ENCODE measurements at regions of chr11 and their contacts with region 1.

Region 1: GRCh38 chr11:67265633-67266423 is 445 bp upstream of the GRK2 start:
- DNase-seq: peak; percentile 70
- H3K4me3 ChIP-seq: no peak overlapping the region
- H3K27ac ChIP-seq: peak overlapping the region; percentile 67 to 76
- H3K4me1 ChIP-seq: peaks cover 27% of the 10 kb centered on the region
- H3K27me3 ChIP-seq: no peaks in the 10 kb centered on the region
- CTCF ChIP-seq: peak; percentile 76 to 97 (median 86)
- POLR2A ChIP-seq: no peak

Region 2: DNA sequence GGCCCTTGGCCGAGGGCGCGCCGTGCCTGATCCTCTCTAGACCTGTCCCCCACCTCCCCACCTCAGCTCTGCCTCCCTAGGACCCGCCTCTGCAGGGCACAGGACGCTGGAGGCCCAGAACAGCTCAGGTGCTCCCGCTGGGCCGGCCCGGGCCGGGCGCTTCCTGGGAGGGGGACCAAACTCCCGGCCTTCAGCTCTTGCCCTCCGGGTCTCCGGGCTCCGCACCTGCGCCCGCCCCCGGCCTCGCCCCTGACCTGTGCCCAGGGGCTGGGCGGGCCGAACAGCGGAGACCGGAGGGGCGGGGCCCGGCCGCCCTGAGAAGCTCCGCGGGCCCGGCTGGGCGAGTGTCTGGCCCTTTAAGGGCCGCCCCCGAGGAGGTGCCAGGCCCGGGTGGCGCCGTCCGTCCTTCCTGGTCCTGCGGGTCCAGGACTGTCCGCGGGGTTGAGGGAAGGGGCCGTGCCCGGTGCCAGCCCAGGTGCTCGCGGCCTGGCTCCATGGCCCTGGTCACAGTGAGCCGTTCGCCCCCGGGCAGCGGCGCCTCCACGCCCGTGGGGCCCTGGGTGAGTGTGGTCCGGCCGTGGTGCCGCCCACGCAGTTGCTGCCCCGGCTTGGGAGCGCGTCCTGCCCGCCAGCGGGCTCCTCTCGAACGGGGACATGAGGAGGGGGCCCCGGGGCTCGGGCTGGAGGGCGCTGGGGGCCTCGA is 37.5 kb after region 1 on chr11 and contains the start of gene SSH3:
- intact Hi-C with region 1: loop called (anchors 5 kb)
- DNase-seq: peak; percentile 81
- H3K4me3 ChIP-seq: peak within 1 kb of the TSS; percentile 85 to 97
- H3K27ac ChIP-seq: peak within 1 kb of the TSS; percentile 89 to 91
- H3K4me1 ChIP-seq: peaks cover 13% of the 10 kb centered on the region
- H3K27me3 ChIP-seq: no peaks in the 10 kb centered on the region
- CTCF ChIP-seq: no peak
- POLR2A ChIP-seq: peak; percentile 90
- total RNA-seq, gene SSH3: 70.9 to 101 TPM

Region 3: DNA sequence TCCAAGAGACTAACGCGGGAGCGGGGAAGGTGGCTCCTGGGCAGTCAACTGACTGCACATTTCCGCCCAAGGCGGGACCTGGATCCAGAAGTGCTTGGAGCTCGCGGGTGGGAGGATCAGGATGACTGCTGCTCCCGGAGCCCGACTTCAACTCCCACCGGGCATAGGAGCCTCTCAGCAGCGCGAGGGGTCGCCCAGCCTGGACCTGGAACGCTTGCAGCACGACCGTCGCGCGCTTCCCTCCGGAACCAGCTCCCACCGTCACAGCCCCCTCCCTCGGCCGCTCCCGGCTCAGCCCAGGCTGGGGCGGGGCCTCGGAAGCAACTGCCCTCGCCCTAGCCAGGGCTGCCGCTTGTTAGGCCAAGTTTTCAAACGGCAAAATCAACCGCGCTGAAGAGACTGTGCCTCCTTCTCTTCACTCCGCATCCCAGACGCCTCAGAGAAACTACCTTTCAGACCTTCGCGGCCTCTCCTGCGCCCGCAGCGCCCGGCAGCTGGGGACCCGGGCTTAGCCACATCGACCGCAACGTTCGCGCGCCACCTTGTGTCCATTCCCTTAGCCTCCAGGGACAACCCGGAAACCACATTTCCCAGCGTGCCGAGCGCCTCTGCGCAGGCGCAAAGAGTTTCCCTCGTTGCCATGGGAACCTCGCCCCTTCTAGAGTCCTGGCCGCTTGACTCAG is 51.5 kb after region 1 on chr11:
- intact Hi-C with region 1: loop called (anchors 1 kb)
- DNase-seq: peak; percentile 96
- H3K4me3 ChIP-seq: peak overlapping the region; percentile 65 to 89
- H3K27ac ChIP-seq: peak overlapping the region; percentile 94 to 97
- H3K4me1 ChIP-seq: peaks cover 3% of the 10 kb centered on the region
- H3K27me3 ChIP-seq: no peaks in the 10 kb centered on the region
- CTCF ChIP-seq: peak; percentile 86 to 100 (median 98)
- POLR2A ChIP-seq: peak; percentile 83

Region 4: GRCh38 chr11:67382276-67383136 is 116.7 kb after region 1 on chr11:
- intact Hi-C with region 1: loop called (anchors 5 kb)
- DNase-seq: peak; percentile 79
- H3K4me3 ChIP-seq: no peak overlapping the region
- H3K27ac ChIP-seq: no peak overlapping the region
- H3K4me1 ChIP-seq: peaks cover 3% of the 10 kb centered on the region
- H3K27me3 ChIP-seq: no peaks in the 10 kb centered on the region
- CTCF ChIP-seq: peak; percentile 83 to 99 (median 94)
- POLR2A ChIP-seq: no peak

Measured in prostate gland (tissue), 2 donors.